GM18951 (cell line): ENCODE measurements at regions of chr5 and their contacts with region 1.

Region 1: DNA sequence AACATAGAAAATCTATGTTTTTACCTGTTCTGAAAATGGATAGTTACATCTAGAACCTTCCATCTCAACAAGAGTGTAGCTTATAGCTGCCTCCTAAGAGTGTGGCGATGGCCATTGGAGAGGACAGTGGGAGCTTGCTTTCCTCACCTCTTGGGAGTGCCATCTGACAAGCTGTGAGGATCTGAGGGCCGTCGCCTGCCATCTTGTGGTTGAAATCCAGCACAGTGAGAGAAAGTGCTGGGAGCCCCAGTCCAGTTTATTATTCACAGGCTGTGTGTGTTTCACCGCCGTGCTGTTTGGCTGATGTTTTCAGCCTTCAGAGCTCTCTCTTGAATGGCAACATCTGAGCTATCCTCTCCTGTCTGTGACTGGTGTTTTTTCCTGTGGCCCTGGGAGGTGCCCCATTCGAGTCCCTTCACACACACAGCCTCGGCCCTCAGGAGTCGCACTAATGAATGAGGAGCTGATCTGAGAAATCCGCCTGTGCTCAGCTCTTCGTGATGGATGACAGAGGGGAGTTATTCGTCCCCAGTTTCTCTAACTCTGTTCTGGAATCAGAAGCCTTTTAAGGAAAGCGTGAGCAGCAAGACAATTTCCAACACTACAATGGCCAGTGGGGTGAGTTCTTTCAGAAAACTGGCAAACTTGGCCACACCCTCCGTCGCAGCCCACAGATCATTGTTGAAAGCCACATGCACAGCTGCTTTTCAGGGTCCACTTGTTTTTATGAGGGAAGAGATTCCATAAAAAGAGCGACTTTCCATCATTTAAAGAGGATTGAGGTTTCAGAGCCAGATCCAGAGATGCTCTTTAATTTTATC is 170.3 kb downstream of the PDZD2 start:
- POLR2A ChIP-seq: no peak

Region 2: GRCh38 chr5:31251032-31251431 is 558.2 kb before region 1 on chr5:
- in situ Hi-C with region 1: no loop called
- POLR2A ChIP-seq: no peak

Region 3: DNA sequence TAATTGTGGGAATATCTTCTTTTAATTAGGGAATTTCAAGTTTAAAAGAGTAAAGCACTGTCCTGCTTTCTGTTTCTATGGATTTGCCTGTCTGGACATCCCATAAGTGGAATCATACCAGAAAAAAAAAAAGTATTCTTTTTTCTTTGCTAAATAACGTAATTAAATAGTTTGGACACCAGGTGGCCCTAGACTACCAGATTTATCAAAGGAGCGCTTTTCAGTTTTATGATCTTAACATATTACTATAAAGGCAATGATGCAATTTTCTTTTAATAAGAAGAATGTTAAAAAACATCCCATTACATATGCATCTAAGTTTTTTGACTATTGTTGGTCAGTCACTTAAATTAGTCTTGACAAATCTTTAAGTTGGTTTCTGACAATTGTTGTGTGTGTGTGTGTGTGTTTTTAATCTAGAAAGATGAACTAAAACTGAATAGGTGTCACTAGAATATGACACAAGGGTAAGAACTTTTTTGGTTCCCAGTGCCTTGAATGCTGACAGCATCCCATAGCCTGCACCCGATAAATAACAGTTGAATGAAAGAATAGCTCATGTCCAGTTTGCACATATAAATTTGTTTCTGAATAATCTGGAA is 227.7 kb before region 1 on chr5:
- in situ Hi-C with region 1: loop called (anchors 25 kb)
- POLR2A ChIP-seq: no peak

Region 4: GRCh38 chr5:31770998-31771397 is 38.3 kb before region 1 on chr5:
- in situ Hi-C with region 1: no loop called
- POLR2A ChIP-seq: no peak